Activated CD4-positive, alpha-beta T cell treated with anti-CD3 and anti-CD28 coated beads for 36 hours (primary cell): ENCODE measurements at regions of chr5 and their contacts with region 1.

Region 1: GRCh38 chr5:138230981-138231589 is 18.0 kb upstream of the CDC23 start:
- DNase-seq: no peak
- ATAC-seq: no peak
- H3K4me3 Mint-ChIP-seq: no peak overlapping the region
- H3K27ac Mint-ChIP-seq: no peak overlapping the region
- H3K4me1 Mint-ChIP-seq: no peaks in the 10 kb centered on the region
- H3K27me3 Mint-ChIP-seq: peaks cover 6% of the 10 kb centered on the region

Region 2: DNA sequence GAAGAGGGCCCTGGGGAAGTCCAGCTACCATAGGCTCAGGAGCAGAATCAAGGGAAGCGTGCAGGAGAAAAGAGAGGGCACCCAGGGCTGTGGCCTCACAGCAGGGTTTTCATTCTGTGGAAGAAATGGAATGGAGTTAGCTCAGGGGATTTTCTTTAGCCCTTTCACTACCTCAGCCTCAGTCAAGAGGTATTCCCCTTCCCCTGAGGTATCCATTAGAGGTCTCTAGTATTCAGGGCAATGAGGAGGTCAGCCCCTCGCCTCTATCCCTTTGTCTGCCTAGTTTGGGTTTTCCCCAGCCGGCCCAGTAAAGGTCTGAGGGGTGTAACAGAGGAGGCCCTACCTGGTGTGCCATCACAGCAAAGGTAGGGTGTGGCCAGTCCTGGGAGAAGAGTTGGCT is 21.9 kb after region 1 on chr5:
- CTCF ChIA-PET with region 1: no interaction called
- POLR2A ChIA-PET with region 1: no interaction called
- intact Hi-C with region 1: no loop called
- DNase-seq: no peak
- ATAC-seq: no peak
- H3K4me3 Mint-ChIP-seq: no peak overlapping the region
- H3K27ac Mint-ChIP-seq: no peak overlapping the region
- H3K4me1 Mint-ChIP-seq: no peaks in the 10 kb centered on the region
- H3K27me3 Mint-ChIP-seq: no peaks in the 10 kb centered on the region

Region 3: DNA sequence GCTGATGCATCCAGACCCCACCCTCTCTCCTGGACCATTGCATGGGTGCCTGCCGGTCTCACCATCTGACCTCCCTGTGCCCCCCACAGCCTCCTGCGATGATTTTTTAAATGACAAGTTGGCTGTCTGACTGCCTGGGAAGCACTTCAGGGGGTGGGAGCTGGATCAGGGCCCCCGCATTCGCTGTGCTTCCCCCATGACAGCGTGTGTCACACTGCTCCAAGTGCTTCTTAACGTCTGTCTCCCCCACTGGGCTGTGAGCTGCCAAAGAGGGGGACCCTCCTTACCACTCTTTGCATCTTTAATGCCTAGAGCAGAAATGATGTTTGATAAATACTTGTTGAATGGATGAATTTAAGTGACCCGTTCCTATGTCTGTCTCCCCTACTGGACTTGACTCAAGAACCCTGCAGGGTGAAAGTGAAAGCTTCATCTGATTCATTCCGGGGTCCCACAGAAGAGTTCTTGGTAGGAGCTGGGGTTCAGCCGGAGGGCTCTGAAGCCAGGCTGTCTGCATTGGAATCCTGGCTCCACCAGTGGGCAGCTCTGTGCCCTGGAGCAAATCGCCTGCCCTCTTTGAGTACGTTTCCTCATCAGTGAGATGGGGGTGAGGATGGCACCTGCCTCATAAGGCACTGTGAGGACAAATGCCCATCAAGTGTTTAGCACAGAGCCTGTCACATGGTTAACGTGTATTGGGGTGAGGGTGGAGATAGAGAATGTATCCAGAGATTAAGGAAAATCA is 226.6 kb after region 1 on chr5:
- CTCF ChIA-PET with region 1: no interaction called
- POLR2A ChIA-PET with region 1: interaction called, 12 read pairs
- intact Hi-C with region 1: no loop called
- DNase-seq: peak; percentile 26
- ATAC-seq: no peak
- H3K4me3 Mint-ChIP-seq: peak overlapping the region; percentile 32
- H3K27ac Mint-ChIP-seq: peak overlapping the region; percentile 73
- H3K4me1 Mint-ChIP-seq: peaks cover 44% of the 10 kb centered on the region
- H3K27me3 Mint-ChIP-seq: no peaks in the 10 kb centered on the region